Calu3 (cell line): ENCODE measurements at regions of chr4 and their contacts with region 1.

Region 1: DNA sequence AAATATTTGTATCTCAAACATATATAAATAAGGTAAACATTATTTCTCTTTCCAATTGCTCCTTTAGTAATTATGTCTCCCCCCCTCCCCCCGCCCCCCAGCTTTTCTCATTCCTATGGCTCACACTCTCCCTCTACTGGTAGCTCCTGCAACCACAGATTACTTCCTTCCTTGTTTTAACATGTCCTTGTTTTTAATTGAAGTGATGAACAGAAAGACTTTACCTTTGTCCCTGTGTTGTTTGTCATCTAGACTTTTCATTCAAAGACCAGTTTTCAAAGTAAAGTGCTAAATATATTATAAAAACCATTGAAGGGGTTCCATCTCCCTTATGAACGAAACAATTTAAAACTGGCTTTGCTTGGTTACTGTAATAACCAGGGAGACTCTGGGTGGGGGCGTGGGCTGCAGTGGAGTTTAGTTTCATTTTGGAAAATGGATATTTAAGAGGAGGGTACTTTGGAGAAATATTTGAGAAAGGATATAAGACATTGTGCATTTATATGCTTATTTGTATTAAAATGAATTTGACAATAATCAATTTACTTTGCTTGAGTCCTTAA is 352.9 kb downstream of the RAPGEF2 start:
- DNase-seq: peak; percentile 36
- H3K4me3 Mint-ChIP-seq: no peak overlapping the region
- H3K27ac Mint-ChIP-seq: no peak overlapping the region
- H3K4me1 Mint-ChIP-seq: no peaks in the 10 kb centered on the region
- H3K27me3 Mint-ChIP-seq: no peaks in the 10 kb centered on the region
- CTCF ChIP-seq: peak; percentile 40

Region 2: GRCh38 chr4:158722917-158723793 is 732.6 kb before region 1 on chr4 and contains the start of gene PPID:
- CTCF ChIA-PET with region 1: no interaction called
- intact Hi-C with region 1: loop called (anchors 10 kb)
- DNase-seq: peak; percentile 77
- H3K4me3 Mint-ChIP-seq: peak within 1 kb of the TSS; percentile 94
- H3K27ac Mint-ChIP-seq: peak within 1 kb of the TSS; percentile 92
- H3K4me1 Mint-ChIP-seq: peaks cover 9% of the 10 kb centered on the region
- H3K27me3 Mint-ChIP-seq: no peaks in the 10 kb centered on the region
- CTCF ChIP-seq: no peak
- total RNA-seq, gene PPID: 32.4 and 34.4 TPM in 2 replicates